Naive thymus-derived CD4-positive, alpha-beta T cell (primary cell): ENCODE measurements at regions of chr21 and their contacts with region 1.

Region 1: DNA sequence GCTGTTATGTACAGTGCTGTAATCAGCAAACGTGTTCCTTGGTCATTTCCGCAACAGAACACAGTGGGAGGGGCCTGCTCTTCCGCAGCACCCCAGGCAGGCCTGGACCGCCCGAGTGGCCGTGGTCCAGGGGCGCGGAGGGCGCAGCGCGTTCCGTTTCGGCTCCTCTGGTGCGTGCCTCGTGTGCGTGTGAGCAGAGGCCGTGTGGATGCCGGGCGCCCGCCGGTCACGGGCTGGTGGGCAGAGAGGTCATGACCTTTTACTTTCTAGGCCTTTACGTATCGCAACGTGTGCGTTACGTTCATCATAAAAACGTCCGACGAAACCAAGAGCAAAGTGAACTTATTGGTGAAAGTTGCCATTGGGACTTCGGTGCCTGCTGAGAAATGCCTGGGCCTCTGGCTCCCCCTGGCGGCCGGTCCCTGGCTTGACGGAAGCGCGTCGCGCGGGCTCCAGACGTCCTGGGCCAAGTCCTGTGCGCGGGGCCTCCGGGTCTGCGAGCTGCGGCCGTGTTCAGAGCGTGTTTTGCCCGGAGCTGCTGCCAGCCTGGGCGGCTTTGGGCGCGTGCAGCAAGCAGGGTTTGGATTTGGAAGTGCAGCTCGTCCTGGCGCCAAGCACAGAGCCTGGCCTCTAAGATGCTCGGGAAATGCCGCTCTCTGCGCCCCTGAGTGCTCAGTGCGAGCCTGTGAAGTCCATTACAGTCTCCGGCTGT is 34.4 kb downstream of the COL18A1 start:
- DNase-seq: peak; percentile 72 to 91 (median 85)
- ATAC-seq: peak; percentile 90
- H3K4me3 ChIP-seq: peak overlapping the region; percentile 46
- H3K4me3 Mint-ChIP-seq: peak overlapping the region; percentile 66 to 82 (median 73)
- H3K27ac ChIP-seq: peak overlapping the region; percentile 66
- H3K27ac Mint-ChIP-seq: peak overlapping the region in 7 of 9 donors; percentile 25 to 92 (median 66)
- H3K4me1 ChIP-seq: peaks cover 4% of the 10 kb centered on the region in 2 donors
- H3K4me1 Mint-ChIP-seq: peaks cover 2 to 16% (median 6%) of the 10 kb centered on the region in 7 donors
- H3K27me3 ChIP-seq: no peaks in the 10 kb centered on the region
- H3K27me3 Mint-ChIP-seq: peaks cover 0 to 5% (median 0%) of the 10 kb centered on the region in 5 donors

Region 2: DNA sequence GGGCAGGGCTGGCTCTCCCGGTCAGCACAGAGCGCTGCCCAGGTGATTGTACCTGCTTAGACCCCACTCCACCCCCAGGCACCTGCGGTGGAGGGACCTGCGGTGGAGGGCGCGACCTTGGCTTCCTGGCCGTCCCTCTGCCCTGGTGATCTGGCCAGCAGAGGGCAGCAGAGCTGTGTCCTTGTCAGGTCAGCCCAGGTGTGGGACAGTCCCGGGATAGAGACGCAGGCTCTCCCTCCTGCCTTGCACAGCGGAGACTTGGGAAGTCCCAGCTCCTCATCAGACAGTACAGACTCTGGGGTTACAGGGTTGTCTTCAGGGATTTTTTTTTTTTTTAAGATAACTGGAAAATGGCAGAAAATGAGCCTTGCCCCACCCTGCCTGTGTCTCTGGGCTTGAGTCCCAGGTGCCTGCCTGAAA is 489.5 kb before region 1 on chr21:
- CTCF ChIA-PET with region 1: no interaction called
- POLR2A ChIA-PET with region 1: no interaction called
- intact Hi-C with region 1: loop called (anchors 1 kb)
- DNase-seq: peak; percentile 57 to 85 (median 71)
- ATAC-seq: peak; percentile 92
- H3K4me3 ChIP-seq: no peak overlapping the region
- H3K4me3 Mint-ChIP-seq: peak overlapping the region in 1 of 10 donors; percentile 20
- H3K27ac ChIP-seq: no peak overlapping the region
- H3K27ac Mint-ChIP-seq: peak overlapping the region in 1 of 9 donors; percentile 48
- H3K4me1 ChIP-seq: peaks cover 6 to 8% of the 10 kb centered on the region in 2 donors
- H3K4me1 Mint-ChIP-seq: peaks cover 0 to 23% (median 16%) of the 10 kb centered on the region in 7 donors
- H3K27me3 ChIP-seq: no peaks in the 10 kb centered on the region
- H3K27me3 Mint-ChIP-seq: no peaks in the 10 kb centered on the region

Region 3: DNA sequence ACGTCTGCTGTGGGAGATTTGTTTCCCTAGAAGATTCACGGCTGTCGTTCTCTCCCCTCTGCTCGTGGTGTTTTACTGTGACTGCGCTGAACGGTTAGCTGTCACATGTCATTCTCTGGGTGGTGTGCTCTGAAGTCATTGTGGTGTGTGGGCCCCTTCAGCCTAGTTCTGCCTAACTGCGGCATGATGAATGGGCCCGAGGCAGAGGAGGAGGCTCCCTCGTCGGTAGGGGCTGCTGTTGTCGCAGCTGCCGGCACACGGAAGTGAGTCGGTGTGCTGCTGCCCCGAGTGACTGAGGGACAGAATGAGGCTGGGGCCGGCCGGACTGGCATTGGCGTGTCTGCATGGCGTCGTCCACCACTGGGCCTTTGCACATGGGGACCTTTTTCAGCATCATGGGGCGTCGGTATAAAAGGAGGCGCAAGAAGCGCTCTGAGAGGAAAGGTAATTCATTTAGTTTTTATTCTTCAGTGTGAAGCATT is 287.0 kb before region 1 on chr21:
- CTCF ChIA-PET with region 1: interaction called, 4 read pairs
- POLR2A ChIA-PET with region 1: no interaction called
- intact Hi-C with region 1: loop called in 1 of 2 experiments (anchors 1 kb)
- DNase-seq: peak; percentile 47 to 75 (median 72)
- ATAC-seq: peak; percentile 95
- H3K4me3 ChIP-seq: no peak overlapping the region
- H3K4me3 Mint-ChIP-seq: peak overlapping the region; percentile 22 to 81 (median 72)
- H3K27ac ChIP-seq: peak overlapping the region; percentile 50
- H3K27ac Mint-ChIP-seq: peak overlapping the region; percentile 72 to 94 (median 85)
- H3K4me1 ChIP-seq: peaks cover 16 to 30% of the 10 kb centered on the region in 2 donors
- H3K4me1 Mint-ChIP-seq: peaks cover 23 to 55% (median 43%) of the 10 kb centered on the region in 7 donors
- H3K27me3 ChIP-seq: no peaks in the 10 kb centered on the region
- H3K27me3 Mint-ChIP-seq: no peaks in the 10 kb centered on the region

Region 4: DNA sequence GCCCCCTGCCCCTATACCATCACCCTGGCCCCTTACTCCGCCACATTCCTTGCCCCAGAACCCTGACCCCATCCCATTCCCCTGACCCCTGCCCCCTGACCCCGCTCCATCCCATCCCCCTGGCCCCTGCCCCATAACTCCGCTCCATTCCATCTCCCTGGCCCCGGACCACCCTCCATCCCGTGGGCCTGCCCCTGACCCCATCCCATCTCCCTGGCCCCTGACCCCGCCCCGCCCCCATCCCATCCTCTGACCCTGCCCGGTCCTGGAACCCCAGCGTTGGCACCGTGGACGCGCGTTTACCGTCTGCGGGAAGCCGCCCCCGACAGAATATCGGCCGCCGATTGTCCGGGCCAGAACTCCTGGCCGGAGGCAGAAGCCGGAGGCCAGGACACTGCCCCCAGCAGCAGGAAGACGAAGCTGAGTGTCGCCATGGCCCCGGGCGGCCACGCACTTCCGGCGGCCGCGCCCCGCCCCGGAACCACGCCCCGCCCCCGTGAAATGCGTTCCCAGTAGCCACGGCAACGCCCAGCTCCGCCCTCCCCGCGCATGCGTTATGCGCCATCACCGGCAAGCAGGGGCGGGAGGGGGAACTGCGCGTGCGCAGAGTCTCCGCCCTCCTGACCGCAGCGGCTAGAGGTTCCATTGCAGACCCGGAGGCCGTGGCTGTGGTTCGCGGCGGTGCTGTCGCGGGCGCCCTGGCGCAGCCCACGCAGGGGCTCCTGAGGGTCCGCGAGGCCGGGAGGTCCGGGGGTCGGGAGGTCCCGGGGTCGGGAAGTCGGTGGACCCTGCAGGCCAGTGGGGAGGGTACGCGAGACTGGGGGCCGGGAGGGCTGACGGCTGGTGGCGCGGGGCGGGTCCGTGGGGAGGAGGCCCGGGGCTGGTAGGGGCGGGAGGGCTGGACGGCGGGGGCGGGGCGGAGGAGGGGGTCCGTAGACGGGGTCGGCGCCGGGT is 151.6 kb before region 1 on chr21 and contains the start of gene POFUT2:
- CTCF ChIA-PET with region 1: interaction called, 12 read pairs
- POLR2A ChIA-PET with region 1: interaction called, 4 read pairs
- intact Hi-C with region 1: loop called in 1 of 2 experiments (anchors 1 kb)
- DNase-seq: peak; percentile 95 to 100 (median 98)
- ATAC-seq: peak; percentile 91
- H3K4me3 ChIP-seq: peak within 1 kb of the TSS; percentile 68
- H3K4me3 Mint-ChIP-seq: peak within 1 kb of the TSS; percentile 68 to 88 (median 87)
- H3K27ac ChIP-seq: peak within 1 kb of the TSS; percentile 97
- H3K27ac Mint-ChIP-seq: peak within 1 kb of the TSS; percentile 72 to 93 (median 87)
- H3K4me1 ChIP-seq: peaks cover 7 to 16% of the 10 kb centered on the region in 2 donors
- H3K4me1 Mint-ChIP-seq: peaks cover 11 to 46% (median 30%) of the 10 kb centered on the region in 7 donors
- H3K27me3 ChIP-seq: no peaks in the 10 kb centered on the region
- H3K27me3 Mint-ChIP-seq: peaks cover 0 to 10% (median 0%) of the 10 kb centered on the region in 5 donors
- total RNA-seq, gene POFUT2: 20.1 to 53.3 (median 47.8) TPM

Region 5: DNA sequence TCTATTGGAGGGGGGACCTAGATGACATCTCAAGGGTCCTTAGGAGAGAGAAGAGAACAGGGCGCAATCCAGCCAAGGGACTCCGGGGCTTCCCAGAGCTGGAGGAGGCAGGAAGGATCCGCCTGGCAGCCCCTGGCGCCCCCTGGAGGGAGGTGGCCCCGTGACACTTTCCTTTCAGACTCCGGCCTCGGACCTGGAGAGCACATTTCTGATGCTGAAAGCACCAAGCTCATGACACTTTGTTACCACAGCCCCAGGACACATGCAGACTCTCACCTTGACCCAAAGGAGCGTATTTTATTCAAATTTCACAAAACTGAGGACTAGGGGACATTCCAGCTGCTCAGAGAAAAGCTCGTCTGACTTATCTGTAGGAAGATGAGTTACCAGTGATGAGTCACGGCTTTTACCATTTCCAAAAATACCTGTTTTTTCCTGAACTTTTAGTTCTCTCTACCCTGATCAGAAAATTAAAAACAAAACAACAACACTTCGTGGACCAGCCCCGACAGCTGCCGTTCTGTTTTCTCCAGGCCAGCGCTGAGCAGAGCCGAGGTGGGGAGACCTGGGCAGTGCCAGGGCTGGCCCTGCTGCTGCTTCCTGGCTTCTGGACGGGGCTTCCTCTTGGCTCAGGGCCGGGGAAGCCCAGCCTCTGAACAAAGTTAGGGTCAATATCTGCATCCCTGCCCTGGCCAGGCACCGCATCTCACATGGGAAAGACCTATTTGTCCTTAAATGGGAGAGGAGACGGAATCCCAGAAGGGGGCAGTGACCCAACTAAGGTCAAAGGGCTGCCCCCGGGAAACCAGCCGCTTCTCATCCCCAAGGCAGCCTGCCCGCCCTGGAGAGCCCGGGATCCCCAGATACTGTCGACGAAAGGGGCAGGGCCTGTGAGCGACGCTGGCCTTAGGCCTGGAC is 130.0 kb before region 1 on chr21:
- CTCF ChIA-PET with region 1: no interaction called
- POLR2A ChIA-PET with region 1: no interaction called
- intact Hi-C with region 1: loop called in 1 of 2 experiments (anchors 1 kb)
- DNase-seq: peak in 3 of 9 donors; percentile 19 to 52 (median 44)
- ATAC-seq: peak; percentile 63
- H3K4me3 ChIP-seq: no peak overlapping the region
- H3K4me3 Mint-ChIP-seq: no peak overlapping the region
- H3K27ac ChIP-seq: peak overlapping the region; percentile 19
- H3K27ac Mint-ChIP-seq: peak overlapping the region in 3 of 9 donors; percentile 11 to 65 (median 28)
- H3K4me1 ChIP-seq: peaks cover 0 to 10% of the 10 kb centered on the region in 2 donors
- H3K4me1 Mint-ChIP-seq: peaks cover 0 to 27% (median 8%) of the 10 kb centered on the region in 7 donors
- H3K27me3 ChIP-seq: no peaks in the 10 kb centered on the region
- H3K27me3 Mint-ChIP-seq: peaks cover 0 to 11% (median 0%) of the 10 kb centered on the region in 5 donors

Region 6: GRCh38 chr21:45322960-45323461 is 116.3 kb before region 1 on chr21:
- CTCF ChIA-PET with region 1: no interaction called
- POLR2A ChIA-PET with region 1: no interaction called
- intact Hi-C with region 1: loop called in 1 of 2 experiments (anchors 1 kb)
- DNase-seq: no peak
- ATAC-seq: no peak
- H3K4me3 ChIP-seq: no peak overlapping the region
- H3K4me3 Mint-ChIP-seq: peak overlapping the region in 8 of 10 donors; percentile 44 to 89 (median 84)
- H3K27ac ChIP-seq: peak overlapping the region; percentile 74
- H3K27ac Mint-ChIP-seq: peak overlapping the region in 8 of 9 donors; percentile 16 to 100 (median 96)
- H3K4me1 ChIP-seq: peaks cover 0 to 26% of the 10 kb centered on the region in 2 donors
- H3K4me1 Mint-ChIP-seq: peaks cover 4 to 21% (median 15%) of the 10 kb centered on the region in 7 donors
- H3K27me3 ChIP-seq: no peaks in the 10 kb centered on the region
- H3K27me3 Mint-ChIP-seq: peaks cover 0 to 2% (median 0%) of the 10 kb centered on the region in 5 donors